Activated CD4-positive, alpha-beta T cell treated with anti-CD3 and anti-CD28 coated beads, Interleukin-2, amount 10 ng/mL, durations not matched to agents 7 days and 5 days (primary cell): ENCODE measurements at regions of chr1 and their contacts with region 1.

Region 1: GRCh38 chr1:113904674-113905434 is at the starts of genes AP4B1 and DCLRE1B:
- DNase-seq: peak; percentile 99
- H3K4me3 Mint-ChIP-seq: peak within 1 kb of the TSS; percentile 89
- H3K27ac Mint-ChIP-seq: peak within 1 kb of the TSS; percentile 96
- H3K4me1 Mint-ChIP-seq: peaks cover 62% of the 10 kb centered on the region
- H3K27me3 Mint-ChIP-seq: no peaks in the 10 kb centered on the region
- total RNA-seq, gene AP4B1: 39.4 to 41.9 TPM
- total RNA-seq, gene DCLRE1B: 16.2 to 19.4 TPM

Region 2: GRCh38 chr1:113868387-113869083 is 36.3 kb before region 1 on chr1:
- CTCF ChIA-PET with region 1: interaction called, 11 read pairs
- POLR2A ChIA-PET with region 1: interaction called, 4 read pairs
- DNase-seq: no peak
- H3K4me3 Mint-ChIP-seq: peak overlapping the region; percentile 92
- H3K27ac Mint-ChIP-seq: peak overlapping the region; percentile 79
- H3K4me1 Mint-ChIP-seq: peaks cover 60% of the 10 kb centered on the region
- H3K27me3 Mint-ChIP-seq: no peaks in the 10 kb centered on the region

Region 3: DNA sequence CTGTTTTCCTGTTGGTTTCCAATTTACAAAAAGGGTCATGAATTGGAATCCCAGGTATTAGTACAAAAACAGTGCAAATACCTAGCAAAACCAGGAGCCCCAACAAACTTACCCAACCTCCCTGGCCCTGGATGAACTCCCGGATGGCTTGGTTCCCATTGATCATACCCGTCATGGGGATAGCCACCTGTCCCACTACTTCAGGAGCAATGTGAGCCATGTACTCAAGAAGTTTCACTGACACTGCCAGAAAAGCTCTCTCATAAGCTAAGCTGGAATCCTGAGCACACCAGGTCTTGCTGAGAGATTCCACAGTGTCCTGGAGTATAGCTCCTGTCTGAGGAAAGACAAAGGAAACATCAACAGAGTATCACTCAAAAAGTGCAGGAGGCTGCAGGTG is 23.2 kb before region 1 on chr1:
- CTCF ChIA-PET with region 1: interaction called, 10 read pairs
- POLR2A ChIA-PET with region 1: no interaction called
- DNase-seq: no peak
- H3K4me3 Mint-ChIP-seq: no peak overlapping the region
- H3K27ac Mint-ChIP-seq: peak overlapping the region; percentile 66
- H3K4me1 Mint-ChIP-seq: peaks cover 42% of the 10 kb centered on the region
- H3K27me3 Mint-ChIP-seq: no peaks in the 10 kb centered on the region

Region 4: DNA sequence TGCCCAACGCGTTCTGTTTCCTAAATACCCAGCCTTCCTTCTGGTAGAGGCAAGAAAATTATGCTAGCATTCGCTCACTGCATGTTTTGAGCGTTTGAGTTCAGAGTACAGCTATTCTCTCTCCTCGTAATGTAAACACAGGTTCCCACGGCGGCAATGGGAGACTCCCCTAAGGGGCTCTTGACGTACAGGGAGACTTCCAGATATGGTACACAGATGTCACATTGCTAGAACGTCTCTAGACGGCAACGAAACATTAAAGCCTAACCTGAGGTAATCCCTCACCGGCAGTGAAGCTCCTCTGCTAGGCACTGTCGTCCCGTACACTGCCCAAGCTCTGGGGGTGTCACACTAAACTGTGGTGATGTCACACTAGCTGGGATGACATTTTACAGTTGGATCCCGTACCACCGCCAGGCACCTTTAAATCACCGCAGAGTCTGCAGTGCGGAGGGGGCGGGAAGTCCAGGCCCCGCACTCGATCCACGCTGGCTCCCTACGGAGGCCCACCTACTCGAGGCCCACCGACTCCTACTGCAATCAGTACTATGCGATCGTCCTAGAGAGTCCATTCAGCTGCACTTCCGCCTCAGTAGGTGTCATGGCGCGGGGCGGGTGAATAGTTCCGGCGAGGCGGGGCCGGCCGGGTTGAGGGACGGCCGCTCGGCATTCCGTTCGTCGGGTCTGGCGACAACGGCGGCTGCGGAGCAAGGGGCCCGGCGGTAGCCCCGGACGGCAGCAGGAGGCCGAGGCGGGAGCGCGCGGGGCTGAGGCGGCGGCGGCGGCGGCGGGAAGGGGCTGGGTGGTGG is 24.3 kb after region 1 on chr1 and contains the start of gene HIPK1:
- CTCF ChIA-PET with region 1: interaction called, 38 read pairs
- POLR2A ChIA-PET with region 1: interaction called, 10 read pairs
- DNase-seq: peak; percentile 94
- H3K4me3 Mint-ChIP-seq: peak within 1 kb of the TSS; percentile 96
- H3K27ac Mint-ChIP-seq: peak within 1 kb of the TSS; percentile 99
- H3K4me1 Mint-ChIP-seq: peaks cover 44% of the 10 kb centered on the region
- H3K27me3 Mint-ChIP-seq: no peaks in the 10 kb centered on the region
- total RNA-seq, gene HIPK1: 88.5 to 106 TPM